ENCODE measurements at regions of chr17 and their contacts with region 1.

Region 1: GRCh38 chr17:43680461-43680860 is 18.7 kb upstream of the MEOX1 start:
- DNase-seq: no peak
- ATAC-seq: no peak
- H3K4me3 Mint-ChIP-seq: no peak overlapping the region
- H3K27ac Mint-ChIP-seq: no peak overlapping the region
- H3K4me1 Mint-ChIP-seq: peaks cover 45% of the 10 kb centered on the region
- H3K27me3 Mint-ChIP-seq: no peaks in the 10 kb centered on the region
- CTCF ChIP-seq: no peak

Region 2: DNA sequence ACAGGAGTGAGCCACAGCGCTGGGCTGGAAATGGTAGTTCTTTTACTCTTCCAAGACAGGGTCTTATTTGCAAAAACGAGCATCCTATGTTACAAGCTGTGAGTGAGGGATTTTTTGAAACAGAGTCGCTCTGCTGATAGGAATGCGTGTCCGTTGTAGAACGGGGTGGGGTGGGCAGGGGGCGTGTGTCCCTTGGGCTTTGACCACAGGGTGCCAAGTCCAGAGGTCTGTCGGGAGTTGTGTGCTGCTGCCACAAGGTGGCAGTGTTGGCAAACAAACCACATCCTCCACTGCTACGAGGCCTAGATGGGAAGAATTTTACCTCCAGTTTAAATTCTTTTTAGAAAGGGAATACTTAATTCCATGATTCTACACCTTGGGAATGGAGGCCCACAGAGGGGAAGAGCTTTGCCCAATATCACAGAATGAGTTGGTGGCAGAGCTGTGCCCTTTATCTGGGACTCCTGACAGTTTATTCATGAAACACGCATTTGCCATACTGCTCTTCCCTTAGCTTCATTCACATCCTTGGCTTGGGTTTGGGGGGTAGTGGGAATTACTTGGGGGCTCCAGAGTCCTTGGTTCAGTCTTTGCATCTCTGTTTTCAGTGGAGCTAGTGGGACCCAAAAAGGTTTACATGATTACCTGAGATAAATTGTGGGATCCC is 103.8 kb before region 1 on chr17:
- CTCF ChIA-PET with region 1: interaction called, 11 read pairs
- POLR2A ChIA-PET with region 1: interaction called, 3 read pairs
- DNase-seq: peak; percentile 85
- ATAC-seq: peak; percentile 83
- H3K4me3 Mint-ChIP-seq: peak overlapping the region; percentile 51
- H3K27ac Mint-ChIP-seq: no peak overlapping the region
- H3K4me1 Mint-ChIP-seq: peaks cover 36% of the 10 kb centered on the region
- H3K27me3 Mint-ChIP-seq: no peaks in the 10 kb centered on the region
- CTCF ChIP-seq: peak; percentile 89

Region 3: GRCh38 chr17:43707184-43707583 is 26.7 kb after region 1 on chr17:
- CTCF ChIA-PET with region 1: no interaction called
- POLR2A ChIA-PET with region 1: no interaction called
- DNase-seq: no peak
- ATAC-seq: no peak
- H3K4me3 Mint-ChIP-seq: no peak overlapping the region
- H3K27ac Mint-ChIP-seq: no peak overlapping the region
- H3K4me1 Mint-ChIP-seq: peaks cover 8% of the 10 kb centered on the region
- H3K27me3 Mint-ChIP-seq: peaks cover 15% of the 10 kb centered on the region
- CTCF ChIP-seq: no peak

Measured in WTC11 (cell line).